Transverse colon (tissue), 4 donors: ENCODE measurements at regions of chr9 and their contacts with region 1.

Region 1: DNA sequence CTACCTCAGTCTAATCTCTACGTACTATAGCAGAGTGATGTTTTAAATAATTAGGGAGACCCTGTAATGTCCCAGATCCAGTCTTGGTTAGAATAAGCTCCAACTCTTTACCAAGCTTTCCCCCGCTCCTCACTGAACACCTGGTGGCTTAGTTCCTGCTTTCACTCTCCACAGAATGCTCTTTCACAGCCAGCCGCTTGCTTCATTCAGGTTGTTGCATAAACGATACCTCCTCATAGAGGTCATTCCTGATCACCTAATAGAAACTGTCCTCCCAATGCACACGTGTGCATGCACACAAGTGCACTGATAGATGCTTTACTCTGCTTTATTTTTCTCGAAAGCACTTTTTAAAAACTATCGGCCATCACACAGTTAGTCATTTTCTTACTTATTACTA is 298.1 kb downstream of the TRPM3 start:
- DNase-seq: no peak
- H3K4me3 ChIP-seq: no peak overlapping the region
- H3K27ac ChIP-seq: no peak overlapping the region
- H3K4me1 ChIP-seq: no peaks in the 10 kb centered on the region
- H3K27me3 ChIP-seq: no peaks in the 10 kb centered on the region
- CTCF ChIP-seq: no peak
- EP300 ChIP-seq: no peak
- POLR2A ChIP-seq: no peak

Region 2: GRCh38 chr9:70031141-70031545 is 792.1 kb before region 1 on chr9:
- in situ Hi-C with region 1: no loop called
- intact Hi-C with region 1: loop called (anchors 5 kb)
- DNase-seq: no peak
- H3K4me3 ChIP-seq: no peak overlapping the region
- H3K27ac ChIP-seq: no peak overlapping the region
- H3K4me1 ChIP-seq: no peaks in the 10 kb centered on the region
- H3K27me3 ChIP-seq: no peaks in the 10 kb centered on the region
- CTCF ChIP-seq: no peak
- EP300 ChIP-seq: no peak
- POLR2A ChIP-seq: no peak

Region 3: GRCh38 chr9:71048280-71048679 is 225.0 kb after region 1 on chr9:
- in situ Hi-C with region 1: no loop called
- intact Hi-C with region 1: no loop called
- DNase-seq: no peak
- H3K4me3 ChIP-seq: no peak overlapping the region
- H3K27ac ChIP-seq: no peak overlapping the region
- H3K4me1 ChIP-seq: peaks cover 0 to 5% (median 0%) of the 10 kb centered on the region in 4 donors
- H3K27me3 ChIP-seq: no peaks in the 10 kb centered on the region
- CTCF ChIP-seq: no peak
- EP300 ChIP-seq: no peak
- POLR2A ChIP-seq: no peak